ENCODE measurements at regions of chr5 and their contacts with region 1.

Region 1: GRCh38 chr5:169116961-169117461 is 183.9 kb downstream of the SLIT3 start:
- DNase-seq: no peak
- H3K4me3 ChIP-seq: no peak overlapping the region
- H3K27ac ChIP-seq: no peak overlapping the region
- H3K4me1 ChIP-seq: no peaks in the 10 kb centered on the region
- CTCF ChIP-seq: 0 out of 2 replicates have a peak, but pooled peaks have one; percentile 30

Region 2: DNA sequence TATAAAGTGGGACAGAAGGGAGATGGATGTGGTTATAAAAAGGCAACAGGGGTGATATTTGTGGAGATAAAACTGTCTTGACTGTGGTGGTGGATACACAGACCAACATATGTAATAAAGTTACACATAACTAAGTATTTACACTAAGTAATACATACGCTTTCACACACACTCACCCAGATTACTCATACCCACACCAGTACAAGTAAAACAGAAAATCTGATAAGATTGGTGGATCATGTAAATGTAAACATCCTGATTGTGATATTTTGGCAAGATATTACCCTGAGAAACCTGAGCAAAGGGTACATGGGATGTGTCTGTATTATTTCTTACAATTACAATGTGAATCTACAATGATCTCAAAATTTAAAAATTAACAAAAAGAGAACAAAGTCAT is 237.3 kb after region 1 on chr5:
- CTCF ChIA-PET with region 1: no interaction called
- POLR2A ChIA-PET with region 1: no interaction called
- intact Hi-C with region 1: no loop called
- DNase-seq: no peak
- H3K4me3 ChIP-seq: no peak overlapping the region
- H3K27ac ChIP-seq: no peak overlapping the region
- H3K4me1 ChIP-seq: no peaks in the 10 kb centered on the region
- CTCF ChIP-seq: no peak

Region 3: GRCh38 chr5:169682026-169682425 is 565.0 kb after region 1 on chr5:
- CTCF ChIA-PET with region 1: no interaction called
- POLR2A ChIA-PET with region 1: no interaction called
- intact Hi-C with region 1: loop called (anchors 5 kb)
- DNase-seq: no peak
- H3K4me3 ChIP-seq: no peak overlapping the region
- H3K27ac ChIP-seq: no peak overlapping the region
- H3K4me1 ChIP-seq: no peaks in the 10 kb centered on the region
- CTCF ChIP-seq: no peak

Measured in OCI-LY7 (cell line).